ENCODE measurements at regions of chr1 and their contacts with region 1.

Region 1: GRCh38 chr1:97123717-97124431 is 402.3 kb downstream of the PTBP2 start:
- DNase-seq: no peak
- H3K4me3 ChIP-seq: no peak overlapping the region
- H3K27ac ChIP-seq: no peak overlapping the region
- H3K27me3 ChIP-seq: no peaks in the 10 kb centered on the region
- CTCF ChIP-seq: no peak

Region 2: GRCh38 chr1:97137862-97138514 is 14.1 kb after region 1 on chr1:
- CTCF ChIA-PET with region 1: interaction called, 12 read pairs
- POLR2A ChIA-PET with region 1: no interaction called
- DNase-seq: no peak
- H3K4me3 ChIP-seq: no peak overlapping the region
- H3K27ac ChIP-seq: no peak overlapping the region
- H3K27me3 ChIP-seq: no peaks in the 10 kb centered on the region
- CTCF ChIP-seq: peak; percentile 73

Measured in AG04450 (cell line).